BJ (cell line): ENCODE measurements at regions of chr1 and their contacts with region 1.

Region 1: GRCh38 chr1:2229037-2229864 is 1.1 kb downstream of the SKI start:
- DNase-seq: no peak
- H3K4me3 ChIP-seq: peak overlapping the region; percentile 80
- H3K27me3 ChIP-seq: no peaks in the 10 kb centered on the region
- CTCF ChIP-seq: no peak

Region 2: DNA sequence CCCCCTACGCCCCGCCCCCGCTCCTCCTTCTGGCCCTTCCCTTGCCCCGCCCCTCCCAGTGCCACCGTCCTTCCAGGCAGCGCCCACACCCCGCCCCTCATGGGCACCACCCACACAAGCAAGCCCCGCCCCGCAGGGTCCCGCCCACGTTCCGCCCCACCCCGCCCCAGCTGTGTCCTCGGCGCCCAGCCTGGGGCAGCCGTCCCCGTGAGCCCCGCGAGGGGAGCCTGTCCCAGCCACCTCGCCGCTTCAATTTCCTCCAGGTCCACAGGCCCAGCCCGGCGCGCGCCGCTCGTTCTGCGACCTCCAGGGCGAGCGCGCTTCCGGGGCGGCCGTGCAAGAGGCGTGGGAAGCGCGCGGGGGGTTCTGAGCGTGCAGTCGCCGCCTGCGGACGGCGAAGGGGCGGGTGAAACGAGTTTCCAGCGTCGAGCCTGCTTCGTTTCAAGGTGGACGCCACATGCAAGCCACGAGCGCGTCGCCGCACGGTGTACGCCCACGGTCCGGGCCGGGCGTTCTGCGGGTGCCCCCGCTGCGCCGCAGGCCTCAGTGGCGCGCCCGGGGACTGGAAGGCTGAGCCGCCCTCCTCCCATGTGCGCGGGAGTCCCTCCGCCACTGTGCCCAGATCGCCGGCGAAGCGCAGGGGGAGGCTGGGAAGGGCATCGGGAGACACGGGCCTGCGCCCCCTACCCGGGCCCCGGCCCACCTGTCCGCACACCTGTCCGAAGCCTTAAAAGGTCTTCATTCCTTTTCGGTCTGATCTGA is 23.9 kb before region 1 on chr1:
- CTCF ChIA-PET with region 1: interaction called, 10 read pairs
- POLR2A ChIA-PET with region 1: interaction called, 3 read pairs
- DNase-seq: no peak
- H3K4me3 ChIP-seq: peak overlapping the region; percentile 49
- H3K27me3 ChIP-seq: no peaks in the 10 kb centered on the region
- CTCF ChIP-seq: no peak